ENCODE measurements at regions of chr5 and their contacts with region 1.

Region 1: GRCh38 chr5:139711067-139711905 is 63.1 kb downstream of the CXXC5 start:
- DNase-seq: peak; percentile 71 to 84
- ATAC-seq: peak; percentile 62 to 77 (median 70)
- H3K4me3 ChIP-seq: peak overlapping the region; percentile 65
- H3K4me3 Mint-ChIP-seq: peak overlapping the region; percentile 83
- H3K27ac ChIP-seq: peak overlapping the region; percentile 97
- H3K27ac Mint-ChIP-seq: peak overlapping the region; percentile 89 to 94
- H3K4me1 ChIP-seq: peaks cover 48% of the 10 kb centered on the region
- H3K4me1 Mint-ChIP-seq: peaks cover 32 to 43% of the 10 kb centered on the region in 2 donors
- H3K27me3 ChIP-seq: no peaks in the 10 kb centered on the region
- H3K27me3 Mint-ChIP-seq: no peaks in the 10 kb centered on the region
- CTCF ChIP-seq: peak; percentile 31

Region 2: DNA sequence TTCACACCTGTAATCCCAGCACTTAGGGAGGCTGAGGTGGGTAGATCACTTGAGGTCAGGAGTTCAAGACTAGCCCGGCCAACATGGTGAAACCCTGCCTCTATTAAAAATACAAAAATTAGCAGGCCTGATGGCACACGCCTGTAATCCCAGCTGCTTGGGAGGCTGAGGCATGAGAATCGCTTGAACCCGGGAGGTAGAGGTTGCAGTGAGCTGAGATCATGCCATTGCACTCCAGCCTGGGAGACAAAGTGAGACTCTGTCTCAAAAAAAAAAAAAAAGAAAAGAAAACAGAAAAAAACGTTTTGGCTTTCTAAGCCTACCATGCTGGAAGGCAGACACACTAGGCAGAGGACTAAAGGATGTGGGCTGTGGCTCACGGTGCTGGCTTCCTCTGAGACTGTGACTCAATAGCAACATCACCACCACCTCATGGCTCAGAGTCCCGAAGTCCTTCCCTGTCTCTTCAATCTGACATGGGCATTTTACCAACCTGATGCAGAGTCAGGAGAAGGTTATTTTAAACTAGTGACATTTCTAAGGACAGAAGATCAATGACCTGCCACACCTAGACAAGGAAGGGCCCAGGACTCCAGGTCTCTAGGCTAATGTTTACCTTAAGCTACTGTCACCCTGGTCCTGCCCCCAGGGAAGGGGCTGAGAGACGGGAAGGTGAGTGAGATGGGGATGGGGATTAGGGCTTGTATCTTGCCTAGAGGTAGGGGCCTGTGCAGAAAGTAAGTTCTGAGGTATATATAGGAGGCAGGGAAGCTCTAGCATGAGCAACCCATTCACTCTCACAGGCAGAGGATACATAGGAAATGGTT is 252.5 kb before region 1 on chr5:
- intact Hi-C with region 1: loop called (anchors 10 kb)
- DNase-seq: peak; percentile 70 to 94
- ATAC-seq: peak; percentile 85 to 91 (median 88)
- H3K4me3 ChIP-seq: no peak overlapping the region
- H3K4me3 Mint-ChIP-seq: peak overlapping the region; percentile 73
- H3K27ac ChIP-seq: peak overlapping the region; percentile 61
- H3K27ac Mint-ChIP-seq: peak overlapping the region; percentile 57 to 92
- H3K4me1 ChIP-seq: peaks cover 48% of the 10 kb centered on the region
- H3K4me1 Mint-ChIP-seq: peaks cover 33 to 59% of the 10 kb centered on the region in 2 donors
- H3K27me3 ChIP-seq: no peaks in the 10 kb centered on the region
- H3K27me3 Mint-ChIP-seq: no peaks in the 10 kb centered on the region
- CTCF ChIP-seq: no peak

Region 3: DNA sequence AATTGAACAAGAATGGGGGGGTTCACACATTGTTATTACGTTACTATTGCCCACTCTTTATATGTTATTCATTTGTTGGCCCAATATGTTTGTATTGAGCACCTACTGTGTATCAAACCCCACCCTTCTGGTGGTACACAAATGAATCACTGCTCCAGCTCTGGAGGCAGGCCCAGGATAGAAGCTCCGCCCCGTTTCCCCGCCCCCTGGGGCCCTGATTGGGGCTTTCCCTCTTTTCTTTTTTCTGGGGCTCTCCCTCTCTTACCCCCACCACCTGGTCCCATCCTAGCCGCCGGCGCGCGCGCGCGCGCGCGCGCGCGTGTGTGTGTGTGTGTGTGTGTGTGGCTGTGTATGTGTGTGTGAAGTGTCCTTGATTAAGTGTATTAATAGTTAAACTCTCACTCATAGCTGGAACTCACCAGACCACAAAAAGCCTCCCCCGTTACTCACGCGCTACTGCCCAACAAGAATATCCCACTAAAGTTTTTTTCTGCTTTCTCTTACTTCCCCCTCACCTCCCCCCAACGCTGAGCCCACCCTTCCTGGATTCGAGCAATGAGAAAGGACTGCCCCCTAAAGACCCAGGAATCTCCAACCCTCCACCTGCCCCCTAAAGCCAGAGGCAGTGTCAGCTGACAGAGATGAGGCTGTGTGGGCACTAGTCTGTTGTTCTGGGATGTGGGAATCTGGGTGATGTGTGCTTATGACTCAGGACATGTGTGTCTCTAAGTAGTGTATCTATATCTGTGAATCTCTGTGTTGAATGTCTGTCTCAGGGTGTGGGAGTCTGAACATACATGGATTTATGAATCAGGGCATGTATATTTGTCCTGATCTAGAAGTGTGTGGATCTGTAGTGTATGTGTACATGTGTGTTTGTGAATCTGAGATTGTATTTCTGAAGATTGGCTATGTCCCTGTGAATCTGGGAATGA is 59.2 kb before region 1 on chr5:
- intact Hi-C with region 1: loop called (anchors 2 kb)
- DNase-seq: peak; percentile 81 to 84
- ATAC-seq: peak; percentile 50 to 66 (median 64)
- H3K4me3 ChIP-seq: peak overlapping the region; percentile 73
- H3K4me3 Mint-ChIP-seq: peak overlapping the region; percentile 88
- H3K27ac ChIP-seq: peak overlapping the region; percentile 85
- H3K27ac Mint-ChIP-seq: peak overlapping the region; percentile 91 to 94
- H3K4me1 ChIP-seq: peaks cover 85% of the 10 kb centered on the region
- H3K4me1 Mint-ChIP-seq: peaks cover 66 to 84% of the 10 kb centered on the region in 2 donors
- H3K27me3 ChIP-seq: no peaks in the 10 kb centered on the region
- H3K27me3 Mint-ChIP-seq: no peaks in the 10 kb centered on the region
- CTCF ChIP-seq: no peak

Region 4: GRCh38 chr5:139755892-139756671 is 44.8 kb after region 1 on chr5:
- intact Hi-C with region 1: no loop called
- DNase-seq: peak; percentile 47 to 51
- ATAC-seq: peak; percentile 38 to 79 (median 55)
- H3K4me3 ChIP-seq: peak overlapping the region; percentile 23
- H3K4me3 Mint-ChIP-seq: peak overlapping the region; percentile 61
- H3K27ac ChIP-seq: no peak overlapping the region
- H3K27ac Mint-ChIP-seq: peak overlapping the region; percentile 3 to 81
- H3K4me1 ChIP-seq: peaks cover 38% of the 10 kb centered on the region
- H3K4me1 Mint-ChIP-seq: peaks cover 19 to 54% of the 10 kb centered on the region in 2 donors
- H3K27me3 ChIP-seq: peaks cover 2% of the 10 kb centered on the region
- H3K27me3 Mint-ChIP-seq: peaks cover 0 to 12% of the 10 kb centered on the region in 2 donors
- CTCF ChIP-seq: no peak